Activated CD8-positive, alpha-beta T cell treated with anti-CD3 and anti-CD28 coated beads for 36 hours (primary cell): ENCODE measurements at regions of chr12 and their contacts with region 1.

Region 1: DNA sequence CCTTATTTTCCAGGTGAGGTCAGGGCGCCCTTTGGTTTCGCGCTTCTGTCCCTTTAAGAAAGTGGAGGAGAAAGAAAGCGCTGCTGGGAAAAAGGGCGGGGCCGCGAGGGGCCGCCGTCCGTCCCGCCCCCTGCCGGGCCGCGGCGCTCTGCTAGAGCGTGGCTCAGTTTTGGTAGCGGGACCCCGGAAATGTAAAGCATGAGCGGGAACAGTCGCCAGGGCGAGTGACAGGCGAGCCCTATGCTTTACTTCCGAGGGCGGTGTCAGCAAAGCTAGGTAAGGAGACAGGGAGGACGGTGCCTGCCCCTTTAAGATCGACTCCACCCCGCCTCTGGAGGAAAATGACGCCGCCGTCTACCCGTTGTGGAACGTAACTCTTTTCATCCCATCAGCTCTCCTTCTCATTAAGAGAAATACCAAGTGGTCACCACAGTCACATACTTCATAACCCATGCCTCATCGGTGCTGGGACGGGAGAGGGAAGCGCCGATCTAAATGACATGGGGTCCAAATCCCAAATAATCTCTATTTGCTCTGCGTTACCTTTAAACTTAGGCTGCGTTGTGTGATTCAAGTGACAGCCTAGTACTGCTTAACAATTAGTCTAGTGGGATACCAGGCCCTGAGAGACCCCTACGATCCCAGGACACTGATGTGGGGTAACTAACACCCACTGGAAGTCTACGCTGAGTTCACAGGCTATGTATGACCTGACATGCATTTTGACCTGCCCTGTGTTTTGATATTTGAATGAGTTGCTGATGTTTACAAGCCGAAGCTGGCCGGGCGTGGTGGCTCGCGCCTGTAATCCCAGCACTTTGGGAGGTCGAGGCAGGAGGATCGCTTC is at the start of gene ETFBKMT:
- DNase-seq: peak; percentile 97
- ATAC-seq: peak; percentile 99
- H3K4me3 Mint-ChIP-seq: peak within 1 kb of the TSS; percentile 92
- H3K27ac Mint-ChIP-seq: peak within 1 kb of the TSS; percentile 98
- H3K4me1 Mint-ChIP-seq: peaks cover 8% of the 10 kb centered on the region
- H3K27me3 Mint-ChIP-seq: no peaks in the 10 kb centered on the region
- CTCF ChIP-seq: no peak
- total RNA-seq, gene ETFBKMT: 0.99 to 1.1 TPM

Region 2: DNA sequence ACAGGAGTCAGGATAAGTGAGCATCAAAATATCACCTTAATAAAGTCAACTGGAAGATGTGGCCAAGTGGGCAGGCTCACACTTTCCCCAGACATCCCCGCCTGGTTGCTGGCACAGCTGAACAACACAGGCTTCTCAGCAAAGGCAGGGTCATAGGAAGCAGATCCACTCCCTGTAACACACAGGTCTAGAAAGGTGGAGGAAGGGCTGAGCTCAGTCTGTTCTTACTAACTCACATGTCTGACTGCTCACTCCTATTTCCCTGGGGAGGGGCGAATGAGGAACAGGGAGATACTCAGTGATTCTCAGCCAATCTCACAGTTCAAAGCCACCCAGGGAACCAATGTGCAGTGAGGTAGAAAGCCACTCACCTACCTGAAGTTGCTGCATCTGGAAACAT is 114.6 kb after region 1 on chr12:
- CTCF ChIA-PET with region 1: no interaction called
- POLR2A ChIA-PET with region 1: no interaction called
- intact Hi-C with region 1: no loop called
- DNase-seq: no peak
- ATAC-seq: peak; percentile 56
- H3K4me3 Mint-ChIP-seq: no peak overlapping the region
- H3K27ac Mint-ChIP-seq: no peak overlapping the region
- H3K4me1 Mint-ChIP-seq: peaks cover 13% of the 10 kb centered on the region
- H3K27me3 Mint-ChIP-seq: no peaks in the 10 kb centered on the region
- CTCF ChIP-seq: no peak

Region 3: GRCh38 chr12:32051559-32052414 is 392.5 kb after region 1 on chr12:
- CTCF ChIA-PET with region 1: no interaction called
- POLR2A ChIA-PET with region 1: no interaction called
- intact Hi-C with region 1: loop called (anchors 10 kb)
- DNase-seq: peak; percentile 31
- ATAC-seq: peak; percentile 32
- H3K4me3 Mint-ChIP-seq: no peak overlapping the region
- H3K27ac Mint-ChIP-seq: no peak overlapping the region
- H3K4me1 Mint-ChIP-seq: peaks cover 6% of the 10 kb centered on the region
- H3K27me3 Mint-ChIP-seq: no peaks in the 10 kb centered on the region
- CTCF ChIP-seq: no peak

Region 4: DNA sequence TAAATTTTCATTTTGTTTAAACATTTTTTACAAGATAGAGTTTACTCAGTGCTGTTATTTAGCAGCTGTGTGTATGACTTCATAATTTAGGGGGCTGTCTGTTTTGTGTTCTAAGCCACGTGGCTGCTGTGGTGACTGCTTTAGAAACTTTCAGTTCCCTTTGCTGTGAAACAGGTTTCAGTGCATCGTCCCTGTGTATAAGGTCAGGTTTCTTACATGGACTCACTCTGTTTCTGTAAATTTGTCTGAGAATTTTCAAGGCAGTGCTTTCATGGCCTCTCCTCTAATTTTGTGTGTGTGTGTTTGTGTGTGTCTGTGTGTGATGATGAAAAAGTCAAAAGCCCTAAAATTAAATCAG is 479.7 kb after region 1 on chr12:
- CTCF ChIA-PET with region 1: no interaction called
- POLR2A ChIA-PET with region 1: interaction called, 3 read pairs
- intact Hi-C with region 1: loop called (anchors 10 kb)
- DNase-seq: peak; percentile 82
- ATAC-seq: peak; percentile 69
- H3K4me3 Mint-ChIP-seq: peak overlapping the region; percentile 80
- H3K27ac Mint-ChIP-seq: peak overlapping the region; percentile 81
- H3K4me1 Mint-ChIP-seq: peaks cover 32% of the 10 kb centered on the region
- H3K27me3 Mint-ChIP-seq: no peaks in the 10 kb centered on the region
- CTCF ChIP-seq: no peak

Region 5: DNA sequence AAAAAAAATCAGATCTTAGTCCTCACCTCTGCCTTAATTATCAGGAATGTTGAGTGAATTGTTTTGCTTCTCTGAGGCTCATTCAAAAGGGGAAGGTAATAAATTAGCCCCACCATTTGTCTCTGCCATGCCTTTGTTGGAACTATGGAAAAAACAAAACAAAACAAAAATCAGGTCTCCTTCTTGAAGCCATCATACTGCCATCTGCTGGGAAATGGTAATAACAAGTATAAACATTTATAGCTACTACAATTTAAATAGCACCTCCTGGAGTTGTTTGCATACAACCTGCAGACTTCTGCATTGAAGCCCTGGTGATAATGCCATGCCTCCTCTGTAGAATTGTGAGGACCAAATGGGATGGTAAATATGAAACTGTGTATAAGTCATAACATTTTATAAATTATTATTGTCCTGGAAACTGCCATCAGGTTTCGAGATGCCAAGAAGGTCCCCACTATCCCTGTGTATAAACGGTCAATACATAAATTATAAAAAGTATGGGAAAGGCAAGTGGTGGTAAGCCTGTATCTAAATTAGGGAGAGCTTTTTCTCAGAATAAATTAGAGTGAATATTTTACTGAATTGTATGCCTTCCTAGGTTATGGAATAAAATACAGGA is 652.9 kb after region 1 on chr12:
- CTCF ChIA-PET with region 1: interaction called, 25 read pairs
- POLR2A ChIA-PET with region 1: no interaction called
- intact Hi-C with region 1: loop called (anchors 5 kb)
- DNase-seq: no peak
- ATAC-seq: no peak
- H3K4me3 Mint-ChIP-seq: no peak overlapping the region
- H3K27ac Mint-ChIP-seq: no peak overlapping the region
- H3K4me1 Mint-ChIP-seq: no peaks in the 10 kb centered on the region
- H3K27me3 Mint-ChIP-seq: no peaks in the 10 kb centered on the region
- CTCF ChIP-seq: peak; percentile 72